Activated B cell treated with CpG ODN at 0.5 μM for 24 hours (primary cell): ENCODE measurements at regions of chr6 and their contacts with region 1.

Region 1: DNA sequence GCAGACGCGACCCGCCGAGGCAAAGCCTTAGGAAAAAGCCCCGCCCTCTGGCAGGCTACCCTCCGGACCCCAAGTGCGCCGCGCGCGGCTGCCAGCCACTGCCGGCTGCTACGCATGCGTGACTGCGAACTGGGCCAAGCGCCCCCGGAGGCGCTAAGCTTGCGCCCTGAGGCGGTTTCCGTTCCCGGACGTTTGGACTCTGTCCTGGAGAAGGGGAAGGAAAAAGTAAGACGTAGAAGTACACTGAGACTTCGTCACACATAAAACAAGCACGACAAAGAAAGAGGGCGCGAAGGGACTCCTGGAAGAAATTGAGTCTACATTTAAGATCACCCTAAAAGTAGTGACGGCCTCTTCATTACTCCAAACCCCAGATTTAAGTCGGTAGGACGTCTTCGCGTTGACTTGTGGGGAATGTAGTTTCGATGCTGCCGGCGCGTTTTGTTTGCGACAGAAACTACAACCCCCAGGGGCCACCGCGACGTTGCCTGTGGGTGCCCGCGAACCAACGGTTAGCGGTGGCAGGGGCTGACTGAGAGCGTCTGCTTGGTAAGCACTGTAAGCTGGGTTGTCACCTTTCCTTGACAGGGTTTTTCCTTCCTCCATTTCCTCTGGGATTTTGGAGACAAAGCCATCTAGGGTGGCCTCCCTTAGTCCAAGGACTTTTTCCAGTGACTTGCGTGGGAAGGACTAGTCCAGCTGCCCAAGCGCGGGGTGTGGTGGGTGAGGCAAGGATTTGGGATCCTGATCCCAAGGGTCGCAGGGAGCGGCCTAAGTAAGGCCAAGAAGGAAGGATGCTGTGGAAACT is at the start of gene CEP57L1:
- DNase-seq: peak; percentile 86
- ATAC-seq: peak; percentile 71
- H3K4me3 Mint-ChIP-seq: peak within 1 kb of the TSS; percentile 97
- H3K27ac Mint-ChIP-seq: peak within 1 kb of the TSS; percentile 100
- H3K4me1 Mint-ChIP-seq: peaks cover 46% of the 10 kb centered on the region
- H3K27me3 Mint-ChIP-seq: no peaks in the 10 kb centered on the region
- CTCF ChIP-seq: no peak
- total RNA-seq, gene CEP57L1: 4.7 and 6.1 TPM in 2 replicates

Region 2: GRCh38 chr6:108074359-108075144 is 1020.7 kb before region 1 on chr6 and contains the start of gene OSTM1:
- CTCF ChIA-PET with region 1: no interaction called
- POLR2A ChIA-PET with region 1: interaction called, 3 read pairs
- intact Hi-C with region 1: loop called (anchors 10 kb)
- DNase-seq: peak; percentile 98
- ATAC-seq: peak; percentile 96
- H3K4me3 Mint-ChIP-seq: peak within 1 kb of the TSS; percentile 87
- H3K27ac Mint-ChIP-seq: peak within 1 kb of the TSS; percentile 89
- H3K4me1 Mint-ChIP-seq: peaks cover 32% of the 10 kb centered on the region
- H3K27me3 Mint-ChIP-seq: peaks cover 2% of the 10 kb centered on the region
- CTCF ChIP-seq: no peak
- total RNA-seq, gene OSTM1: 17.6 and 21.4 TPM in 2 replicates

Region 3: DNA sequence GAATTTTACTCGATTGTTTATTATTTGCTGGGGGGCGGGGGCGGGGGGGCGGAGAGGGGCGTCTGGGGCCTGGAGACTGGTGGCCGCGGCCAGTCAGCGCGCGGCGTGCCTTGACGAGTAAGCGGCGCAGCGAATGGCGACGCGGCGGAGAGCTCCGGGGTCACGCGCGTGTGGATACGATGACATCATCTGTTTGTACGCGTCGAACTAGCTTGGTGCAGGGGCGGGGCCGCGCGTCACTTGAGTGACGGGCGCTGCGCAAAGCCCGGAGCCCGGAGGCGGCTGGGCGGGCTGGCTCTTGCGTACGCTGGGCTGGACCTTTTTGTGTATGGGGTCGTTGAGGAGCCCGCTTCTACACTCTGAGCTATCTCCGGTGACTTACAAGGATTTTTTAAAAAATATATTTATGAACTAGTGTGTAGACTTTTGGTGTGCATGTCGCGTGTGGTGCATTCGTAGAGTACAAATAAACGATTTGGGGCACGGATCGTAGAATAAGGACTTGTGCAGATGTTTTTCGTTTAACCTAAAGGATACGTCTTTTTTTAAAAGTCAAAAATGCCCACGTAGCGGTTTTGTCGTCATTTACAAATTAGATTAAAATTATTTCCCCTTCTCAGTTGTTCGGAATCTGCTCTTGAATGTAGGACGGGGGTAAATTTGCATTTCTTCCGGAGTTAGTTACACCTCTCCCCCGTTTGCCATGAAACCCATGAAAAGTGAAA is 536.7 kb before region 1 on chr6:
- CTCF ChIA-PET with region 1: no interaction called
- POLR2A ChIA-PET with region 1: interaction called, 30 read pairs
- intact Hi-C with region 1: loop called (anchors 1 kb)
- DNase-seq: peak; percentile 93
- ATAC-seq: peak; percentile 65
- H3K4me3 Mint-ChIP-seq: peak overlapping the region; percentile 95
- H3K27ac Mint-ChIP-seq: peak overlapping the region; percentile 97
- H3K4me1 Mint-ChIP-seq: peaks cover 24% of the 10 kb centered on the region
- H3K27me3 Mint-ChIP-seq: peaks cover 8% of the 10 kb centered on the region
- CTCF ChIP-seq: no peak

Region 4: GRCh38 chr6:108822401-108822800 is 272.8 kb before region 1 on chr6:
- CTCF ChIA-PET with region 1: no interaction called
- POLR2A ChIA-PET with region 1: no interaction called
- intact Hi-C with region 1: no loop called
- DNase-seq: no peak
- ATAC-seq: no peak
- H3K4me3 Mint-ChIP-seq: no peak overlapping the region
- H3K27ac Mint-ChIP-seq: no peak overlapping the region
- H3K4me1 Mint-ChIP-seq: no peaks in the 10 kb centered on the region
- H3K27me3 Mint-ChIP-seq: peaks cover 8% of the 10 kb centered on the region
- CTCF ChIP-seq: no peak

Region 5: DNA sequence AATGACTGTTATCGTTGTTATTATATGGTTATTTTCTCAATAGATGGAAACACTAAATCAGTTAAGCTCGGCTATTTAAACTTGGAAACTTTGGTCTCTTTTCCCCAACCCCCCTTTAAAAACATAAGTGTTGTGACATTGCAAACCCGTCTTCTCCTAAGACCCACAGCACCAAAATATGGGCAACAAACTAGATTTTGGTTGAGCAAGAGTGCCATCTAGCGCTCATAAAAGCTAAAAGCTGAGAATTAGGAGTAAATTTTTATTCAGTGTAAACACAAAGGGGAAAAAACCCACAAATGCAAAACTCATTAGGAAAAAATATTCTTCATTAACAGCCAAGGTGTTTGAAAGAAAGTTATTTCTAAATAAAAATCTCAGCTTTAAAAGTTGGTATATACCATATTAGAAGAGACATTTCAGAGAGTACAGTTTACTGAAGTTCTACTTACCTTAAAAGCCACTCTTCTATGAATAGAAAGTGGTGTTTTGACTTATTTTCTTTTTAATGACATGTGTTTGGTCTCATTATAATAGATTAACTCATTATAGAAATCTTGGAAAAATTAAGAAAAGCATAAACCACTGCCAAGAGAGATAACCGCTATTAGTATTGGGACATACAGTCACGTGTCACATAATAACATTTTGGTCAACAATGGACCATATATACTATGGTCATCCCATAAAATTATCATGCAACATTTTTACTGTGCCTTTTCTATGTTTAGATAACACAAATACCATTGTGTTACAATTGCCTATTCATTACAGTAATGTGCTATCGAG is 21.7 kb before region 1 on chr6:
- CTCF ChIA-PET with region 1: interaction called, 14 read pairs
- POLR2A ChIA-PET with region 1: interaction called, 3 read pairs
- intact Hi-C with region 1: no loop called
- DNase-seq: no peak
- ATAC-seq: no peak
- H3K4me3 Mint-ChIP-seq: no peak overlapping the region
- H3K27ac Mint-ChIP-seq: no peak overlapping the region
- H3K4me1 Mint-ChIP-seq: peaks cover 5% of the 10 kb centered on the region
- H3K27me3 Mint-ChIP-seq: no peaks in the 10 kb centered on the region
- CTCF ChIP-seq: peak; percentile 89

Region 6: DNA sequence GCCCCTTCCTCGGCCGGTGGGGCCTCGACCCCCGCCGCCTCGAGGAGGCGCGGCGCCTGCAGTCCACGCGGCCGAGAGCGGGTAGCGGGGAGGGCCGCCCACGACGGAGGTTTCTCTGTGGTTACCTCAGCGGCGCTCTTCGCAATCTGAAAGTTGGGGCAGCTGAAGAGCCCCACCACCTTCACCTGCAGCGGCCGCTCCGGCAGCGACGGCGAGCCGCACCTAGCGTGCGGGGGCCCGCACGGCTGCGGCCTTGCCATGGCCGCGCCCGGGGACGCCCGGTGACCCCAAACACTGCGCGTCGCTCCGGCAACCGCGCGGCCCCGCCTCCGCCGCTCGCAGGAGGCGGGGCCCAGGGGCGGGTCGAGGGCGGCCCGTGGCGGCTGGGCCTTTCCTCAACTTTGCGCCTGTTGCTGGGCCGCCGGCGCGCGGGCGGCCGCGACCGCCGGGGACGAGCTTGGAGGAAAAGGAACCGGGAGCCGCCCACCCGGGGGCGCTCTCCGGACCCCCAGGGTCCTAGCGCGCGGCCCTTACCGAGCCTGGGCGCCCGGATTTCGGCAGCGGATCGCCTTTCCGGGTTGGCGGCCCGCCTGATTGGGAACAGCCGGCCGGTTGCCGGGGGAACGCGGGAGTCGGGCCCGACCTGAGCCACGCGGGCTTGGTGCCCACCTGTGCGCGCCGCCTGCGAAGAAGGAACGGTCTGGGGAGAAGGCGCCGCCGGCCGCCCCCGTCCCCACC is 345.3 kb after region 1 on chr6 and contains the starts of genes PPIL6 and SMPD2:
- CTCF ChIA-PET with region 1: interaction called, 3 read pairs
- POLR2A ChIA-PET with region 1: interaction called, 12 read pairs
- intact Hi-C with region 1: loop called (anchors 1 kb)
- DNase-seq: peak; percentile 89
- ATAC-seq: peak; percentile 83
- H3K4me3 Mint-ChIP-seq: peak within 1 kb of the TSS; percentile 96
- H3K27ac Mint-ChIP-seq: peak within 1 kb of the TSS; percentile 95
- H3K4me1 Mint-ChIP-seq: peaks cover 34% of the 10 kb centered on the region
- H3K27me3 Mint-ChIP-seq: no peaks in the 10 kb centered on the region
- CTCF ChIP-seq: no peak
- total RNA-seq, gene PPIL6: 0.73 and 0.91 TPM in 2 replicates
- total RNA-seq, gene SMPD2: 24.9 and 28.2 TPM in 2 replicates

Region 7: GRCh38 chr6:109690737-109691621 is 595.7 kb after region 1 on chr6 and contains the starts of genes AK9 and FIG4:
- CTCF ChIA-PET with region 1: no interaction called
- POLR2A ChIA-PET with region 1: no interaction called
- intact Hi-C with region 1: loop called (anchors 1 kb)
- DNase-seq: peak; percentile 88
- ATAC-seq: peak; percentile 93
- H3K4me3 Mint-ChIP-seq: peak within 1 kb of the TSS; percentile 94
- H3K27ac Mint-ChIP-seq: peak within 1 kb of the TSS; percentile 95
- H3K4me1 Mint-ChIP-seq: peaks cover 42% of the 10 kb centered on the region
- H3K27me3 Mint-ChIP-seq: no peaks in the 10 kb centered on the region
- CTCF ChIP-seq: no peak
- total RNA-seq, gene AK9: 9.1 and 10.6 TPM in 2 replicates
- total RNA-seq, gene FIG4: 19.8 and 21.8 TPM in 2 replicates